ENCODE measurements at regions of chr5 and their contacts with region 1.

Region 1: DNA sequence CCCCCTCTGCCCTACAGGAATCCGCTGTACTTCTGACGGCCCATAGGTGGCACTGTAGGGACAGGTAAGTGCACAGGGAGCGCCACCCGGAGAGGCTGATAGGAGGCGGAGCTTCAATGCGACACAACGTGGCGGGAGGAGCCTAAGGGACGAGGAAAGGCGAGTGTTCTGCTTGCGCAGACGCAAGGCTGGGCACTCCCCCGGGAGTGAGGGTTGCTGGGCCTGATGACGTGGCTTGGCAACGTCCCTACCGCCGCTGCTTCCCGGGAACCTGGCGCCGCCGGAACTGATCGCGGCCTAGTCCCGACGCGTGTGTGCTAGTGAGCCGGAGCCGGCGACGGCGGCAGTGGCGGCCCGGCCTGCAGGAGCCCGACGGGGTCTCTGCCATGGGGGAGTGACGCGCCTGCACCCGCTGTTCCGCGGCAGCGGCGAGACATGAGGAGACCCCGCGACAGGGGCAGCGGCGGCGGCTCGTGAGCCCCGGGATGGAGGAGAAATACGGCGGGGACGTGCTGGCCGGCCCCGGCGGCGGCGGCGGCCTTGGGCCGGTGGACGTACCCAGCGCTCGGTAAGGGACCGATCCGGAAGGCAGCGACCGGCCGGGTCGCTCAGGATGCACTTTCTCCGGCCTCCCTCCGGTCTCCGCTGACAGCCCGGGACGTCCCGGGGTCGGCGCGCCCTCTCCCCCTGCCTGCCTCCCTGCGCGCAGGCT is at the start of gene SLC30A5:
- DNase-seq: peak; percentile 99
- ATAC-seq: peak; percentile 100
- H3K4me3 ChIP-seq: peak within 1 kb of the TSS; percentile 72 to 95
- H3K27ac ChIP-seq: peak within 1 kb of the TSS; percentile 83
- H3K4me1 ChIP-seq: peaks cover 0 to 14% of the 10 kb centered on the region in 2 experiments; a peak in 1 of 4 replicates
- H3K27me3 ChIP-seq: no peaks in the 10 kb centered on the region
- CTCF ChIP-seq: peak; percentile 74 to 88 (median 80); a peak in 5 of 6 replicates
- POLR2A ChIP-seq: peak; percentile 77
- RAD21 ChIP-seq: peak; percentile 97
- total RNA-seq, gene SLC30A5: 50.0 TPM

Region 2: GRCh38 chr5:68862560-68862959 is 231.4 kb before region 1 on chr5:
- CTCF ChIA-PET with region 1: no interaction called
- POLR2A ChIA-PET with region 1: no interaction called
- RAD21 ChIA-PET with region 1: no interaction called
- intact Hi-C with region 1: no loop called
- DNase-seq: no peak
- ATAC-seq: no peak
- H3K4me3 ChIP-seq: no peak overlapping the region
- H3K27ac ChIP-seq: no peak overlapping the region
- H3K4me1 ChIP-seq: no peaks in the 10 kb centered on the region
- H3K27me3 ChIP-seq: no peaks in the 10 kb centered on the region
- CTCF ChIP-seq: no peak
- POLR2A ChIP-seq: no peak
- RAD21 ChIP-seq: no peak

Region 3: GRCh38 chr5:69042915-69043658 is 50.8 kb before region 1 on chr5:
- CTCF ChIA-PET with region 1: interaction called, 8 read pairs
- POLR2A ChIA-PET with region 1: interaction called, 4 read pairs
- RAD21 ChIA-PET with region 1: interaction called in 1 of 2 experiments, 3 read pairs
- intact Hi-C with region 1: loop called (anchors 2 kb)
- DNase-seq: peak; percentile 88
- ATAC-seq: peak; percentile 93
- H3K4me3 ChIP-seq: peak overlapping the region; percentile 47 to 60
- H3K27ac ChIP-seq: peak overlapping the region; percentile 37; the same call in 1 of the 2 replicates
- H3K4me1 ChIP-seq: peaks cover 4 to 12% of the 10 kb centered on the region in 2 experiments; a peak in 3 of 4 replicates
- H3K27me3 ChIP-seq: no peaks in the 10 kb centered on the region
- CTCF ChIP-seq: peak; percentile 70 to 91 (median 72); a peak in 5 of 6 replicates
- POLR2A ChIP-seq: no peak
- RAD21 ChIP-seq: peak; percentile 87

Region 4: GRCh38 chr5:69083412-69083811 is 10.5 kb before region 1 on chr5:
- CTCF ChIA-PET with region 1: interaction called, 30 read pairs
- POLR2A ChIA-PET with region 1: no interaction called
- RAD21 ChIA-PET with region 1: interaction called in 1 of 2 experiments, 3 read pairs
- intact Hi-C with region 1: no loop called
- DNase-seq: peak; percentile 47
- ATAC-seq: peak; percentile 99
- H3K4me3 ChIP-seq: no peak overlapping the region
- H3K27ac ChIP-seq: no peak overlapping the region
- H3K4me1 ChIP-seq: peaks cover 9 to 15% of the 10 kb centered on the region in 2 experiments
- H3K27me3 ChIP-seq: no peaks in the 10 kb centered on the region
- CTCF ChIP-seq: peak; percentile 44 to 49 (median 48); a peak in 5 of 6 replicates
- POLR2A ChIP-seq: peak; percentile 80
- RAD21 ChIP-seq: peak; percentile 59

Region 5: GRCh38 chr5:69217548-69218526 is 123.9 kb after region 1 on chr5:
- CTCF ChIA-PET with region 1: no interaction called
- POLR2A ChIA-PET with region 1: no interaction called
- RAD21 ChIA-PET with region 1: no interaction called
- intact Hi-C with region 1: loop called (anchors 10 kb)
- DNase-seq: peak; percentile 83
- ATAC-seq: peak; percentile 93
- H3K4me3 ChIP-seq: peak overlapping the region; percentile 97
- H3K27ac ChIP-seq: peak overlapping the region; percentile 82
- H3K4me1 ChIP-seq: peaks cover 8 to 17% of the 10 kb centered on the region in 2 experiments; a peak in 3 of 4 replicates
- H3K27me3 ChIP-seq: no peaks in the 10 kb centered on the region
- CTCF ChIP-seq: peak in 1 of 3 experiments; percentile 15; a peak in 1 of 6 replicates
- POLR2A ChIP-seq: peak; percentile 48
- RAD21 ChIP-seq: no peak

Region 6: DNA sequence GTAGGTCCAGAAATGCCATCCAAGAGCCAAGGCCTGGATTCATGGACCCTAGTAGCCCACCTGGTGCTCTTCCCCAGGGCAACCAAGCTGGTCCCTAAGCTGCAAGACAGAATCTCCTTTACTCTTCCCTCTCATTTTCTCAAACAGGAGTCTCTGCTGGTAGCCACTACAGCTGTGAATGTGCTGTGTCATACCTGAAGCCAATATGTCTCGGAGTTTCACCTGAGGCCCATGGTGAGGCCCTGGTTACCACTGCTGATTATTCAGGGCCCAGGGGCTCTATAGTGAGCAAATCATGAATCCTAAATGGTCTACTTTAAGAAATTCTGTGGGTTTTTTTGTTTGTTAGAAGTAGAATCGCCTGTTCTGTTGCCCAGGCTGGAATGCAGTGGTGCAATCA is 156.7 kb after region 1 on chr5:
- CTCF ChIA-PET with region 1: no interaction called
- POLR2A ChIA-PET with region 1: no interaction called
- RAD21 ChIA-PET with region 1: no interaction called
- intact Hi-C with region 1: no loop called
- DNase-seq: no peak
- ATAC-seq: no peak; the same call in 1 of the 2 replicates
- H3K4me3 ChIP-seq: no peak overlapping the region
- H3K27ac ChIP-seq: no peak overlapping the region
- H3K4me1 ChIP-seq: peaks cover 6 to 17% of the 10 kb centered on the region in 2 experiments
- H3K27me3 ChIP-seq: no peaks in the 10 kb centered on the region
- CTCF ChIP-seq: no peak
- POLR2A ChIP-seq: no peak
- RAD21 ChIP-seq: no peak

Region 7: GRCh38 chr5:69334793-69335268 is 240.9 kb after region 1 on chr5:
- CTCF ChIA-PET with region 1: interaction called, 22 read pairs
- POLR2A ChIA-PET with region 1: no interaction called
- RAD21 ChIA-PET with region 1: no interaction called
- intact Hi-C with region 1: loop called (anchors 1 kb)
- DNase-seq: peak; percentile 57
- ATAC-seq: peak; percentile 85
- H3K4me3 ChIP-seq: no peak overlapping the region
- H3K27ac ChIP-seq: no peak overlapping the region
- H3K4me1 ChIP-seq: peaks cover 9 to 45% of the 10 kb centered on the region in 2 experiments; a peak in 3 of 4 replicates
- H3K27me3 ChIP-seq: no peaks in the 10 kb centered on the region
- CTCF ChIP-seq: peak; percentile 51 to 76 (median 73); a peak in 5 of 6 replicates
- POLR2A ChIP-seq: no peak
- RAD21 ChIP-seq: peak; percentile 80

Region 8: DNA sequence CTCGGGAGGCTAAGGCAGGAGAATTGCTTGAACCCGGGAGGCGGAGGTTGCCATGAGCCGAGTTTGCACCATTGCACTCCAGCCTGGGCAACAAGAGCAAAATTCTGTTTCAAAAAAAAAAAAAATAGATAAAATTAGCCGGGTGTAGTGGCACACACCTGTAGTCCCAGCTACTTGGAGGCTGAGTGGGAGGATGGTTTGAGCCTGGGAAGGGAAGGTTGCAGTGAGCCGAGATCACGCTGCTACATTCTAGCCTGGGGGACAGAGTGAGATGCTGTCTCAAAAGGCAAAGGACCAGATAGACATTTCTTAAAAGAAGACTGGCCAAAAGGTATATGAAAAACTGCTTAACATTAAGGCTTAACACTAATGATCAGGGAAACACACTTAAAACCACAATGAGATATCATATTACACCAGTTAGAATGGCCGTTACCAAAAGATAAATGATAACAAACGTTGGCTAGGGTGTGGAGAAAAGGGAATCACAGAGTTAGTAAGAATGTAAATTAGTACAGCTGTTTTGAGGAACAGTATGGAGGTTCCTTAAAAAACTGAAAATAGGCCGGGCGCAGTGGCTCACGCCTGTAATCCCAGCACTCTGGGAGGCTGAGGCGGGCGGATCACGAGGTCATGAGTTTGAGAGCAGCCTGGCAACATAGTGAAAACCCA is 310.9 kb after region 1 on chr5:
- CTCF ChIA-PET with region 1: interaction called, 13 read pairs
- POLR2A ChIA-PET with region 1: no interaction called
- RAD21 ChIA-PET with region 1: interaction called in 1 of 2 experiments, 3 read pairs
- intact Hi-C with region 1: loop called (anchors 10 kb)
- DNase-seq: no peak
- ATAC-seq: no peak
- H3K4me3 ChIP-seq: no peak overlapping the region
- H3K27ac ChIP-seq: no peak overlapping the region
- H3K4me1 ChIP-seq: no peaks in the 10 kb centered on the region
- H3K27me3 ChIP-seq: no peaks in the 10 kb centered on the region
- CTCF ChIP-seq: no peak
- POLR2A ChIP-seq: no peak
- RAD21 ChIP-seq: no peak